WTC11 (cell line): ENCODE measurements at regions of chr9 and their contacts with region 1.

Region 1: DNA sequence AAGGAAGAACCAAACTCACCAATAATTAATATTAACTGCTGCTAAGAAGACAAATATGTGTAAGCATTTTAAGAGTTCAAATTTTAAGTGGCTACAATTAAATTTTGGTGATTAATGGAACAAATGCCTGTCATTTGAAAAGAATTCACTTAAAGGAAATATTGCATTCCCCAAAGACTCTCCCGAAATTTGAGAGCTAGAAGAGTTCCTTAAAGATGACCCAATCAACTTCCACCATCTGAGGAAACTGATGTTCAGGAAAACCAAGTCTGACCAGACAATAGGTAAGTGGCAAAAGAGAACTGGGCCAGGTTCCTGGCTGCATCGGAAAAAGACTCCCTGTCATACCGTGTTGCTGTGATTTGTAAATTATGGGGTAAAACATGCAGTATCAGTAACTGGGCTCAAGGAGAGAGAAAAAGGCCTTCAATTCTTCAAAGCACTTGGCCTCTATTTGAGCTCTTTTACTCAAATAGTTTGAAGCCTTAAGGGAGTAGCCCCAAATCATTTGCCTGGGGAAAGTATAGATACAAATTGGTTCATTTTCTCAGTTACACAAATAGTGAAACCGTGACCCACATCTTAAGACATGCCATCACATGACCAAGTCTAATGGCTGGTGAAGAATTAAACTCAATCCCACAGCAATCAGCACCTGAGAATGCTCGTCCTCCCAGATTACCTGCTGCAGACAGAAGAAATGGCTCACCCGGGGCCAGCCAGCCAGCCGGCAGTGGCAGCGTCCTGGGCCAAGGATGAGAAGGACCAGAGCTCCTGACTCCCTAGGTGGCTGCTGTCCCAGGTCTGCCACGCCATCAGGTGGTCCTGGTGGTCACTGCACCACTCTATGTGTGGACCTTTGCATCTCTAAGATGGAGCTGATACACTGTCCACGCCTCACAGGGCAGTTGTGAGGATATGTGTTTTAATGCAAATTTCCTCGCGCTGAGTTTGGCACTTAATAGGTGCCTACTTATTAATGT is 162.9 kb downstream of the TTLL11 start:
- DNase-seq: peak; percentile 79
- ATAC-seq: peak; percentile 97
- H3K4me3 Mint-ChIP-seq: no peak overlapping the region
- H3K27ac Mint-ChIP-seq: no peak overlapping the region
- H3K4me1 Mint-ChIP-seq: peaks cover 5% of the 10 kb centered on the region
- H3K27me3 Mint-ChIP-seq: no peaks in the 10 kb centered on the region; the same call in 1 of the 2 replicates
- CTCF ChIP-seq: peak; percentile 32

Region 2: DNA sequence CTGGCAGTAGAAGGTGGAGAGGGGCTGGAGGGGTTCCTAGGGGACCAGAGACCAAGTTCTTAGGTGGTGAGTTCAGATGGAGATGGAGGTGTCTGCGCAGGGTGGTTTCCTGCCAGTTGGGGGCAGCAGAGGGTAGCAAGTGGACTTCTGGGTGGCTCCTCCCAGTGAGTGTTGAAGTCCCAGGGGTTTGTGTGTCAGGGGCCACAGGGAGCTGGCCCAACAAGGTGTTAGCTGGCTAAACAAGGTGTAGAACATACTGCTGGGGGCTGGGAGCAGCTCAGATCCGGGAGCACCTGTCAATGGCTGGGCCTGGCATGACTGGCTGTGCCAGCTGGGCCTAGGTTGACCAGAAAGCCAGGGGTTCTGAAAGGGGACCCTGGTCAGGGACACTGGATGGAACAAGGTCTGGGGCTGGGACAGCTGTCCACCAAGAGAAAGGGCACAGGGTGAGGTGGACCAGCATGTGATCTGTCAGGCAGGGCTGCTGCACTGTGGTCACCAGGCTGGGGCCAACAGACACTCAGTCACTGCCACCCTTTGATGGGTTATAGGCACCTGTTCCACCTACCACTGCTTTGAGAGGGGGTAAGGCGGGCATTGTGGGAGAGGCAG is 243.1 kb before region 1 on chr9:
- CTCF ChIA-PET with region 1: interaction called, 15 read pairs
- POLR2A ChIA-PET with region 1: no interaction called
- DNase-seq: peak; percentile 89
- ATAC-seq: peak; percentile 80
- H3K4me3 Mint-ChIP-seq: no peak overlapping the region
- H3K27ac Mint-ChIP-seq: no peak overlapping the region
- H3K4me1 Mint-ChIP-seq: peaks cover 21% of the 10 kb centered on the region
- H3K27me3 Mint-ChIP-seq: no peaks in the 10 kb centered on the region
- CTCF ChIP-seq: peak; percentile 68; the same call in 1 of the 2 replicates

Region 3: DNA sequence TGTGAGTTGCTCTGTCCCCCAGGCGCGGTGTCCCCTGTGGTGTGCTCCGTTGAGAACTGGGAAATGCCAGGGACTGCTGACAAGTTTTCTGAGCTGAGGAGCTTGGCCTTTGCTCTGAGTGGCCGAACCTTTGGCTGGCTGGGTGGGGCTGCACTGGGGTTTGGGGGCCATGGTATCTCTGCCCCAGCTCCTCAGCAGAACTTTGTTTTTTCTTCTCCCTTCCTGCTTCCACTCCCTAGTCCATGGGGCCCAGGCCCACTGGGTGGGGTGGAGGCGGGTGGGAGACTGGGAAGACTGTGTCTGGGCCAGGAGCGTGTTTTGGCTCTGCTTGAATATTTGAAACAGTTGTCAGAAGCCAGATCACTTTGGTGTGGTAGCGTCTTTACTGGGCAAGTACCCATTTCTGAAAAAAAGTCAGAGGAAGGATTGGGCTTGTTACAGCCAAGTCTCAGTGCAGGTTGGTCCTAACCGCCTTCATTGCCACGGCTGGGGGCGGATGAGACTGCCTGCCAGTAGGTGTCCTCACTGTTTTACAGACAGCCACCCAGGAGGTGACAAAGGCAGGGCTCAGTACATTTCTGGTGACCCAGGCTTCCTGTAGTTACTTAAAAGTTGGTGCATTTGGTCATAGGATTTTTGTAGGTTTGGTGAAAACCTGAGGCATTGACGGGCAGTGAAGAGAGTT is 186.0 kb before region 1 on chr9:
- CTCF ChIA-PET with region 1: interaction called, 13 read pairs
- POLR2A ChIA-PET with region 1: no interaction called
- DNase-seq: peak; percentile 47
- ATAC-seq: peak; percentile 35
- H3K4me3 Mint-ChIP-seq: no peak overlapping the region
- H3K27ac Mint-ChIP-seq: no peak overlapping the region
- H3K4me1 Mint-ChIP-seq: peaks cover 40% of the 10 kb centered on the region
- H3K27me3 Mint-ChIP-seq: no peaks in the 10 kb centered on the region
- CTCF ChIP-seq: no peak

Region 4: GRCh38 chr9:121861501-121862180 is 68.5 kb before region 1 on chr9:
- CTCF ChIA-PET with region 1: interaction called, 13 read pairs
- POLR2A ChIA-PET with region 1: no interaction called
- DNase-seq: peak; percentile 64
- ATAC-seq: peak; percentile 82
- H3K4me3 Mint-ChIP-seq: no peak overlapping the region
- H3K27ac Mint-ChIP-seq: no peak overlapping the region
- H3K4me1 Mint-ChIP-seq: peaks cover 42% of the 10 kb centered on the region
- H3K27me3 Mint-ChIP-seq: no peaks in the 10 kb centered on the region
- CTCF ChIP-seq: peak; percentile 28; the same call in 1 of the 2 replicates

Region 5: DNA sequence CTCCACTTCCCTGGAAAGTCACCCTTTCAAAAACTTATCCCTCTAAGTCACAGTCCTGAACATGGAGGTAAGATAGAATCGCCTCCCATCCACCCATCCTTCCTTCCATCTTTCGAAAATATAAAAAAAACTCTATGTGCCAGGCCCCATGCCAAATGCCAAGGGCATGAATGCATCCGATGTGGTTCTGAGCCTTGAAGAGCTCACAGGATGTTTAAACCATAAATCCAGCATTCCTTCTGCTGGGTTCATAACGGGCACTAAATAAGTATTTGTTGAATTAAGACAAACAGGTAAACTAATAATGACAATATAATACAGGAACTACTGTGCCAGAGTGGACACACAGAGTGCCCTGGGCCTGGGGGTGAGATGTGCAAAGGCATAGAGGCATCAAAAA is 15.7 kb after region 1 on chr9:
- CTCF ChIA-PET with region 1: interaction called, 19 read pairs
- POLR2A ChIA-PET with region 1: no interaction called
- DNase-seq: no peak
- ATAC-seq: no peak
- H3K4me3 Mint-ChIP-seq: no peak overlapping the region
- H3K27ac Mint-ChIP-seq: no peak overlapping the region
- H3K4me1 Mint-ChIP-seq: peaks cover 16% of the 10 kb centered on the region
- H3K27me3 Mint-ChIP-seq: peaks cover 10% of the 10 kb centered on the region; the same call in 1 of the 2 replicates
- CTCF ChIP-seq: no peak